Right cardiac atrium (tissue), 5 donors: ENCODE measurements at regions of chr15 and their contacts with region 1.

Region 1: DNA sequence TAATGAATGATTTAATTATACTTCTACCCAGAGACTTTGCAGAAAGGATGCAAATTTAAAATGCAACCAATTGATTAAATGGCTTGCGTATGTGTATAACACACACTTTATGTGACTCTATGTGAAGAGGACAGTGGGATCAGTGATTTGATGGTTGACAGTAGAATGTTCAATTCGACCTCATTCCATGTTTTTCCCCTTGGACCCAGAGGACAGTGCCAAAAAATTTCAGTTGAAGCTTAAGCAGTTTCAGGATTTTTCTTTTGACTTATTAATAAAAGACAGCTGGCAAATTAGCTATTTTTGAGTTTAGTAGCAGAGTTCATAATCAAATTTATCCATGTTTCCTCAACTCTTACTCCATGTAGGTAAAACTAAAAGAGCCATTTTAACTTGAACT is 742.4 kb upstream of the NR2F2 start:
- DNase-seq: no peak
- ATAC-seq: no peak
- H3K4me3 ChIP-seq: no peak overlapping the region
- H3K27ac ChIP-seq: no peak overlapping the region
- H3K4me1 ChIP-seq: no peaks in the 10 kb centered on the region
- H3K27me3 ChIP-seq: no peaks in the 10 kb centered on the region

Region 2: GRCh38 chr15:96276438-96277210 is 688.6 kb after region 1 on chr15:
- intact Hi-C with region 1: loop called in 1 of 4 experiments (anchors 5 kb)
- DNase-seq: no peak
- ATAC-seq: no peak
- H3K4me3 ChIP-seq: no peak overlapping the region
- H3K27ac ChIP-seq: no peak overlapping the region
- H3K4me1 ChIP-seq: no peaks in the 10 kb centered on the region
- H3K27me3 ChIP-seq: no peaks in the 10 kb centered on the region